MCF 10A (cell line): ENCODE measurements at regions of chr2 and their contacts with region 1.

Region 1: GRCh38 chr2:185291035-185291647 is 447.5 kb upstream of the FSIP2 start:
- DNase-seq: peak; percentile 71
- H3K4me3 Mint-ChIP-seq: no peak overlapping the region
- H3K27ac Mint-ChIP-seq: peak overlapping the region; percentile 18
- H3K4me1 Mint-ChIP-seq: no peaks in the 10 kb centered on the region
- H3K27me3 Mint-ChIP-seq: no peaks in the 10 kb centered on the region
- CTCF ChIP-seq: peak; percentile 84

Region 2: DNA sequence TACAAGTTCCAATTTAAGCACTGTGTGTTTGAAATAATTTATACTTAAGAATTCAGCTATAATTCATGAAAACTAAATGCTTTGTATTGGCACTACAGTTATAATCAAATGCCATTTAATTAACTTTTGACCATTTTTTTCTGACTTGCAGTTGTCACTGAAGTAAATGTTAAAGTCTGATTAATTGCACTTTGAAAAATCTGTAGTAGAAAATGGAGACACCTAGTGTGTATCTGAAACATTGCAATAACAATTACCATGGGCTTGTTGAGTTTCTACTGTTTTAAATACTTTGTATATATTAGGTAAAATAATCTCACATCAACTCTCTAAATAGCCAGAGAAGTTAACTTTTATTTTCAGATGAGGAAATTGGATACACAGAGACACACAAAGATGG is 11.1 kb before region 1 on chr2:
- CTCF ChIA-PET with region 1: interaction called, 16 read pairs
- POLR2A ChIA-PET with region 1: no interaction called
- intact Hi-C with region 1: no loop called
- DNase-seq: peak; percentile 30
- H3K4me3 Mint-ChIP-seq: no peak overlapping the region
- H3K27ac Mint-ChIP-seq: no peak overlapping the region
- H3K4me1 Mint-ChIP-seq: no peaks in the 10 kb centered on the region
- H3K27me3 Mint-ChIP-seq: no peaks in the 10 kb centered on the region
- CTCF ChIP-seq: peak; percentile 55

Region 3: DNA sequence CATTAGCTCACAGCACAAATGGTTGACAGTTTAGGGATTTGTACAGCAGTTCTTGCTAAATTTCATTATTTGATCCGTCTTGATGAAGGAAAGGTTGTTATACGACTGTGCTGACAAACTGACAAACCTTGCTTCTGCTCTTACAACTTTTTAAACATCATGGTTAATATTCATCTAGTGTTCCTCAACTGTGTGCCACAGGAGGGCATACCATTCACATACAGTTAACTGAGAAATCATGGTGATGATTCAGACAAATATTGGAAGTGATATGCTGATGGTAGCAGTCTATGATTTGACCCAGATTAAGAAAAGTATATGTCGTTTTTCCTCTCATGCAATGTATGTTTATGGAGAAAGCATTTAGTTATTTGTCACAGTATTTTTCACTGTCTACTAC is 317.7 kb after region 1 on chr2:
- CTCF ChIA-PET with region 1: interaction called, 3 read pairs
- POLR2A ChIA-PET with region 1: no interaction called
- intact Hi-C with region 1: loop called (anchors 1 kb)
- DNase-seq: peak; percentile 45
- H3K4me3 Mint-ChIP-seq: no peak overlapping the region
- H3K27ac Mint-ChIP-seq: no peak overlapping the region
- H3K4me1 Mint-ChIP-seq: peaks cover 7% of the 10 kb centered on the region
- H3K27me3 Mint-ChIP-seq: no peaks in the 10 kb centered on the region
- CTCF ChIP-seq: peak; percentile 42

Region 4: GRCh38 chr2:186241873-186242272 is 950.7 kb after region 1 on chr2:
- CTCF ChIA-PET with region 1: interaction called, 11 read pairs
- POLR2A ChIA-PET with region 1: no interaction called
- intact Hi-C with region 1: no loop called
- DNase-seq: no peak
- H3K4me3 Mint-ChIP-seq: no peak overlapping the region
- H3K27ac Mint-ChIP-seq: no peak overlapping the region
- H3K4me1 Mint-ChIP-seq: peaks cover 6% of the 10 kb centered on the region
- H3K27me3 Mint-ChIP-seq: no peaks in the 10 kb centered on the region
- CTCF ChIP-seq: peak; percentile 8

Region 5: DNA sequence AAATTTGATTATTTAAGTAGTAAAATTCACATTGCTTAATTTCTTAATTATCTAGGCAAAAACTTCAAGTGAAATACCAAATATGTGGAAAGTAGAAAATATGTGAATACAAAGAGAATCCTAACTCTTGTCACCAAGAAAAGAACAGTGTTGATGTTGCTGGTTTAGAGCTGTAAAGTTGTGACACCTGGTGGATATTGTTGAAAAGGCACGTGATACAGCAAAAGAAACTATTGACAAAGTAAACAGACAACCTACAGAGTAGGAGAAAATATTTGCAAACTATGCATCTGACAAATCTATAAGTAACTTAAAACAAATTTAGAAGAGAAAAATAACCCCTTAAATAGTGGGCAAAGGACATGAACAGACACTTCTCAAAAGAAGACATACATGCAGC is 1169.3 kb after region 1 on chr2:
- CTCF ChIA-PET with region 1: interaction called, 12 read pairs
- POLR2A ChIA-PET with region 1: no interaction called
- intact Hi-C with region 1: loop called (anchors 1 kb)
- DNase-seq: peak; percentile 35
- H3K4me3 Mint-ChIP-seq: no peak overlapping the region
- H3K27ac Mint-ChIP-seq: no peak overlapping the region
- H3K4me1 Mint-ChIP-seq: no peaks in the 10 kb centered on the region
- H3K27me3 Mint-ChIP-seq: no peaks in the 10 kb centered on the region
- CTCF ChIP-seq: peak; percentile 39